Endothelial cell of umbilical vein (primary cell): ENCODE measurements at regions of chr3 and their contacts with region 1.

Region 1: GRCh38 chr3:2156244-2156847 is 57.7 kb downstream of the CNTN4 start:
- DNase-seq: no peak
- H3K4me3 ChIP-seq: no peak overlapping the region
- H3K27ac ChIP-seq: no peak overlapping the region
- H3K4me1 ChIP-seq: no peaks in the 10 kb centered on the region
- H3K27me3 ChIP-seq: no peaks in the 10 kb centered on the region
- CTCF ChIP-seq: peak; percentile 42 to 47
- POLR2A ChIP-seq: no peak

Region 2: GRCh38 chr3:632572-633170 is 1523.7 kb before region 1 on chr3:
- CTCF ChIA-PET with region 1: no interaction called
- POLR2A ChIA-PET with region 1: no interaction called
- dilution Hi-C with region 1: no loop called
- intact Hi-C with region 1: loop called (anchors 5 kb)
- DNase-seq: peak; percentile 26
- H3K4me3 ChIP-seq: no peak overlapping the region
- H3K27ac ChIP-seq: no peak overlapping the region
- H3K4me1 ChIP-seq: no peaks in the 10 kb centered on the region
- H3K27me3 ChIP-seq: no peaks in the 10 kb centered on the region
- CTCF ChIP-seq: peak; percentile 38 to 54
- POLR2A ChIP-seq: no peak

Region 3: GRCh38 chr3:2334921-2335320 is 178.6 kb after region 1 on chr3:
- CTCF ChIA-PET with region 1: no interaction called
- POLR2A ChIA-PET with region 1: no interaction called
- dilution Hi-C with region 1: no loop called
- intact Hi-C with region 1: no loop called
- DNase-seq: no peak
- H3K4me3 ChIP-seq: no peak overlapping the region
- H3K27ac ChIP-seq: no peak overlapping the region
- H3K4me1 ChIP-seq: no peaks in the 10 kb centered on the region
- H3K27me3 ChIP-seq: no peaks in the 10 kb centered on the region
- CTCF ChIP-seq: no peak
- POLR2A ChIP-seq: no peak